PC-3 (cell line): ENCODE measurements at regions of chr13 and their contacts with region 1.

Region 1: DNA sequence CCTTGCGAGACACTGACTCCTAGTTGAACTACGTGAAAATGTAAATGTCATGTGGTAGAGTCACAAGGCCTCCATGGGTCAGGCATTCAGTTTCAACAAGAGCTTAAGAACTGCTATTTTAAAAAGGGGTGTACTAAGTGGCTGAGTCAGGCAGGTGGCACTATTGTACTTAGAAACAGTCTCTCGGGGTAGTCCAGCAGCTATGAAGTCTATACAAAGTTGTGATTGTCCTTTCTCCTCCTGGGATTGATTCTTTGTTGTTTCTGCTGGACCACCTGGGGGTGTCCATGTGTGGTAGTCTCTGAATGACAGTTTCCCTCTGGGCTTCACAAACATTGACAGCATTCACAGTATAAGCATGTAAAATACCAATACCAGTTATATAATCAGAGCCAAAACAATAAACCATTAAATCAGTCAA is 33.0 kb downstream of the UGGT2 start:
- DNase-seq: peak; percentile 69
- ATAC-seq: peak; percentile 85
- H3K4me3 ChIP-seq: no peak overlapping the region
- H3K27ac ChIP-seq: peak overlapping the region; percentile 25; the same call in 1 of the 2 replicates
- H3K4me1 ChIP-seq: peaks cover 17% of the 10 kb centered on the region
- H3K27me3 ChIP-seq: no peaks in the 10 kb centered on the region
- CTCF ChIP-seq: peak; percentile 80

Region 2: GRCh38 chr13:95937714-95938320 is 82.3 kb before region 1 on chr13:
- CTCF ChIA-PET with region 1: no interaction called
- POLR2A ChIA-PET with region 1: no interaction called
- intact Hi-C with region 1: no loop called
- DNase-seq: no peak
- ATAC-seq: no peak
- H3K4me3 ChIP-seq: no peak overlapping the region
- H3K27ac ChIP-seq: no peak overlapping the region
- H3K4me1 ChIP-seq: no peaks in the 10 kb centered on the region
- H3K27me3 ChIP-seq: no peaks in the 10 kb centered on the region
- CTCF ChIP-seq: no peak

Region 3: GRCh38 chr13:96075953-96076543 is 55.9 kb after region 1 on chr13:
- CTCF ChIA-PET with region 1: no interaction called
- POLR2A ChIA-PET with region 1: no interaction called
- intact Hi-C with region 1: loop called (anchors 1 kb)
- DNase-seq: peak; percentile 49
- ATAC-seq: no peak
- H3K4me3 ChIP-seq: no peak overlapping the region
- H3K27ac ChIP-seq: no peak overlapping the region
- H3K4me1 ChIP-seq: no peaks in the 10 kb centered on the region
- H3K27me3 ChIP-seq: no peaks in the 10 kb centered on the region
- CTCF ChIP-seq: peak; percentile 66

Region 4: GRCh38 chr13:96229356-96229755 is 209.2 kb after region 1 on chr13:
- CTCF ChIA-PET with region 1: interaction called, 14 read pairs
- POLR2A ChIA-PET with region 1: no interaction called
- intact Hi-C with region 1: loop called (anchors 1 kb)
- DNase-seq: peak; percentile 48
- ATAC-seq: peak; percentile 40; the same call in 1 of the 2 replicates
- H3K4me3 ChIP-seq: no peak overlapping the region
- H3K27ac ChIP-seq: no peak overlapping the region
- H3K4me1 ChIP-seq: no peaks in the 10 kb centered on the region
- H3K27me3 ChIP-seq: no peaks in the 10 kb centered on the region
- CTCF ChIP-seq: peak; percentile 59

Region 5: DNA sequence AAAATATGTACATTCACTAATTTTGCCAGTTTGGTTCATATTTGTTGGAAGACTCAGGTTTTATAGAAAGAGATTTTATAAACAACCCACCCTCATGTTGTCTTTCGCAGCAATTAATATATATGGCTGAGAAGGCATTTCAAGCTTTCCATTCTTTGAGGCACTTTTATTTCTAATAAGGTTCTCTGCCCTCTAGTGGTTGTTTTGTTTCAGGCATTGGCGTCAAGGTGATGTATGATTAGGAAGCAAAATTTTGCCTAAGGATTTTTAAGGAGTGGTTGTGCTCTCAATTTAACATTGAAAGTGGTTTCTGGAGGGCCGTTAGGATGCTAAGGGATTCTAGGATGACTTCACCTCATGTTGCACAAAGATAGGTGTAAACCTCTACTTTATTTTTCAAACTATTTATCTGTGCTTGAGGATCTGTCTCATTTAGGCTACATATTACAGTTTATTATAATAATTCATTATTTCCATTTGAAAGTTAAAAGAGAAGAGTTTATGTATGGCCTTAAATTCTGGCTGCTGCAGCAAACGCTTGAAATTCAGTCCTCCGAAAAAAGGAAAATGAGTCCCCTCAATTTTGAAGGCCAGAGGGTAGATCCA is 938.2 kb after region 1 on chr13:
- CTCF ChIA-PET with region 1: no interaction called
- POLR2A ChIA-PET with region 1: no interaction called
- intact Hi-C with region 1: loop called (anchors 1 kb)
- DNase-seq: peak; percentile 60
- ATAC-seq: 0 out of 2 replicates have a peak, but pooled peaks have one; percentile 31
- H3K4me3 ChIP-seq: no peak overlapping the region
- H3K27ac ChIP-seq: no peak overlapping the region
- H3K4me1 ChIP-seq: no peaks in the 10 kb centered on the region
- H3K27me3 ChIP-seq: peaks cover 33% of the 10 kb centered on the region
- CTCF ChIP-seq: peak; percentile 69